PC-3 (cell line): ENCODE measurements at regions of chr9 and their contacts with region 1.

Region 1: DNA sequence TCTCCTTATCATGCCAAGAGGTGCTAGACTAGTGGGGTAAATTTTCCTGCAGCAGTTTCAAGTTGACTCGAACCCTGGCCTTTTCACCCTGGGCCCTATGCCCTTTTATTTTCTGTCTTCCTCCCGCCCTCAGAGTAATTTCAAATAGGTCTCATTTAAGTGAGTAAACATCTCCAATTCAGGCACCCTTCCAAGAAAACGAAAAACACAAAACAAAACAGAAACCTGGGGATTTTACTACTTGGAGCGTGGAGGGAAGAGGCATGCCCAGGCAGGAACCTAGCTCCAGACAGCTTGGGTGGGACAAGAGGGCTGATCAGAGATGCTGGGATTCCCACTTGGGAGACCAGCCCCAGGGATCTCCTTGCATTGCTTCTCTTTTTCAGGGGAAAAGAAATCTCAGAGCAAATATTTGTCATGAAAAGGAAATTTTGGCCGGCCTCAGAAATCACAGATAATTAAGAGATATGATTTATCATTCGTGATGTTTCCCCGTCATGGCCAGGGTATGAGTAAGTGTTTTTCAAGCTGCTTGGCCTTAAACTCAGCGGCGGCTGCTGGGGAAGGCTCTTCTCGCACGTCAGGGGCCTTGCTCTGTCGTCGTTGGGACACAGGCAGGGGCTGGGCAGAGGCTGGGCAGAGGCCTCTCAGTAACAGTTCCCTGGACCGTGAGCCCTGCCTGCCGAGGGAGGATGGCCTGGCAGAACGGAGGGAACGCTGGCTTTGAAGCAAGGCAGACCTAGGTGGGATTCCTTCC is 248.6 kb upstream of the KLF4 start:
- DNase-seq: peak; percentile 56
- ATAC-seq: peak; percentile 64
- H3K4me3 ChIP-seq: no peak overlapping the region; the same call in 1 of the 2 replicates
- H3K27ac ChIP-seq: peak overlapping the region; percentile 98
- H3K4me1 ChIP-seq: peaks cover 45% of the 10 kb centered on the region
- H3K27me3 ChIP-seq: no peaks in the 10 kb centered on the region
- CTCF ChIP-seq: no peak

Region 2: GRCh38 chr9:107504569-107505377 is 233.4 kb before region 1 on chr9:
- CTCF ChIA-PET with region 1: no interaction called
- POLR2A ChIA-PET with region 1: no interaction called
- intact Hi-C with region 1: loop called (anchors 2 kb)
- DNase-seq: peak; percentile 92
- ATAC-seq: peak; percentile 89
- H3K4me3 ChIP-seq: peak overlapping the region; percentile 50
- H3K27ac ChIP-seq: peak overlapping the region; percentile 99
- H3K4me1 ChIP-seq: peaks cover 23% of the 10 kb centered on the region
- H3K27me3 ChIP-seq: no peaks in the 10 kb centered on the region
- CTCF ChIP-seq: no peak

Region 3: DNA sequence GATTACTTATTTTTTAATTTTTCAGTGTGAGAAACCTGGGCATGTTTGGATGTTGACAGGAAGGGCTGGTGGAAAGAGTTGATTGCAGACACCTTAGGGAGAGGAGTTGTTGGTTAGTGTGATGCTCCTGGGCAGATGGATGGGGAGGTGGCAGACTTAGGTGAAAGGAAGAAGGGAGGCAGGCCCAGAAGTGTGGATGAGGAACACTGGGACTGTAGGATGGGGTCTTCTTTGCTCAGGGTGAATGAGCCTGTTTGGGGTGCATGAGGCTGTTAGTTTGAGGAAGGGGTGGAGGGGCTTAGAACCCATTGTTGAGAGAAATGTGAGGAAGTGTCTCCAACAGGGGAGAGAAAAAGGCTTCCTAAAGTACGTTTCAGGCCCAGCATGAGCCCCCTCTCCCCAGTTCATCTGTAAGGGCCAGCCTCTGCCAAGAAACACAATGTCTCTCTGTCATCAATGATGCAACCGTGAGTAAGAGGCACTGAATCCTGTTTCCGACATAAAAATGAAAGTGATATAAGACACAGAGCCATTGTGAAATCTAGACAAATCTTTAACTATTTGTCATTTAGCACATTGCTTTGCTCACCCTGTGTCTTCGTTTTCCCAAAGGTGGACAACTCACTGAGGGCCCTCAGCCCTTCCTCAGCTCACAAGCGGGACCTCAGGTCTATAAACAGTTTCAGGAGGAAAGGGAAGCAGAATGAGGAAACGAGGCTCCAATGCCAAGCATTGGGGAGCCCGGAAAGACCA is 189.9 kb before region 1 on chr9:
- CTCF ChIA-PET with region 1: no interaction called
- POLR2A ChIA-PET with region 1: no interaction called
- intact Hi-C with region 1: loop called (anchors 2 kb)
- DNase-seq: peak; percentile 89
- ATAC-seq: peak; percentile 87
- H3K4me3 ChIP-seq: peak overlapping the region; percentile 45; the same call in 1 of the 2 replicates
- H3K27ac ChIP-seq: peak overlapping the region; percentile 92
- H3K4me1 ChIP-seq: peaks cover 19% of the 10 kb centered on the region
- H3K27me3 ChIP-seq: no peaks in the 10 kb centered on the region
- CTCF ChIP-seq: no peak

Region 4: DNA sequence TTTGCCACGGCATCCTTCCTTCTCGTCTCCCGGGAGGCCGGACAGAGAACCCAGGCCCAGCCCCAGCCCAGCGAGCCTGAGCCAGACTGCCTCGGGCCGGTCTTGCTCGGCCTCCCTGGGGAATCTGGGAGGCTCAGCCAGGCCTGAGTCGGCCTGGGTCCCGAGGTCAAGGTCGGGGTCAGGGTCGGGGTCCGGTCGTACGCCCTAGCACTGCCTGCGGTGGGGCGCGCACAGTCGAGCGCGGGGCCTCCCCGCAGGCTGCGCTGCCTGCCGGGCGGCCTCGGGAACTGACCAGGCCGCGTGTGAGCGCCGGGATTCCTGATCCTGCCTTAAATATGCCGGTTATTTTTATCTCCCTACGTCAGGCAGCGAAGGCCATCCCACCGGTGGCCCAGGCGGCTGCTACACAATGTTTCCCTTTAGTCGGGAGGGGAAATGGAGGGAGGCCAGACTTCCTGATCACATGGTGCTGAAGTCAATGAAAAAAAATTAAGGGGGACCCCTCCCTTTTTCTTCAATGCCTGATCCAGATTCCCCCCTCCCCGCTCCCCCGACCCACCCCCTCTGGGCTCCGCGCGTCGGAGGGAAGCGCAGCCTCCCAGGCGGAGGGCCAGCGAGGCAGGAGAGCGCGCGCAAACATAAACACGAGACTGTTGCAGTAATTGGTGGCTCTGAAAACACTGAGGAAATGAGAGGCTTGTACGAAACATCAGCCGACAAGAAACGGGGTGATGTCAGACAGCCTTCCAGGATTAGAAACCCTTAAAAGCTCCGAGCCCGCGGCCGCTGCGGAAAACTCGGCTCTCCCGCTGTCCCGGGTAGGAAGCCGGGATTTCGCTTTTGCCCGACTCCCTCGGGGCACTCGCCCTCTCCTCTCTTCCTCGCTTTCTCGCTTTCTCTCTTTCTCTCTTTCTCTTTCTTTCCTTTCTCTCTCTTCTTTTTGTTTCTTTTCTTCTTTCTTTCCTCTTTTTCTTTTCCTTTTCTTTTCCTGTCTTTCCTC is 100.4 kb before region 1 on chr9:
- CTCF ChIA-PET with region 1: no interaction called
- POLR2A ChIA-PET with region 1: no interaction called
- intact Hi-C with region 1: loop called (anchors 5 kb)
- DNase-seq: peak; percentile 31
- ATAC-seq: peak; percentile 59
- H3K4me3 ChIP-seq: peak overlapping the region; percentile 73
- H3K27ac ChIP-seq: no peak overlapping the region
- H3K4me1 ChIP-seq: no peaks in the 10 kb centered on the region
- H3K27me3 ChIP-seq: no peaks in the 10 kb centered on the region
- CTCF ChIP-seq: no peak